Dorsolateral prefrontal cortex (tissue), 120 donors: ENCODE measurements at regions of chr19 and their contacts with region 1.

Region 1: GRCh38 chr19:53195265-53195903 is 2.2 kb upstream of the ZNF665 start:
- DNase-seq: peak; percentile 58 to 91 (median 77)
- H3K4me3 ChIP-seq: no peak overlapping the region
- H3K27ac ChIP-seq: peak overlapping the region in 28 of 59 donors; percentile 0 to 85 (median 44)
- H3K27me3 ChIP-seq: no peaks in the 10 kb centered on the region
- CTCF ChIP-seq: peak; percentile 63 to 96 (median 91)

Region 2: GRCh38 chr19:52962394-52963246 is 232.8 kb before region 1 on chr19 and contains the start of gene ZNF816:
- intact Hi-C with region 1: loop called in 1 of 2 experiments (anchors 10 kb)
- DNase-seq: peak; percentile 83 to 93 (median 88)
- H3K4me3 ChIP-seq: peak within 1 kb of the TSS; percentile 40 to 84 (median 71)
- H3K27ac ChIP-seq: peak within 1 kb of the TSS in 57 of 59 donors; percentile 10 to 89 (median 71)
- H3K27me3 ChIP-seq: no peaks in the 10 kb centered on the region
- CTCF ChIP-seq: peak in 4 of 56 donors; percentile 7 to 40 (median 30)
- total RNA-seq, gene ZNF816: 2.2 to 11.9 (median 5.0) TPM

Region 3: GRCh38 chr19:53103198-53103944 is 92.0 kb before region 1 on chr19 and contains the start of gene ZNF160:
- intact Hi-C with region 1: loop called (anchors 10 kb)
- DNase-seq: peak; percentile 97 to 100 (median 98)
- H3K4me3 ChIP-seq: peak within 1 kb of the TSS; percentile 68 to 98 (median 92)
- H3K27ac ChIP-seq: peak within 1 kb of the TSS; percentile 15 to 98 (median 91)
- H3K27me3 ChIP-seq: no peaks in the 10 kb centered on the region
- CTCF ChIP-seq: peak in 7 of 56 donors; percentile 4 to 39 (median 21)
- total RNA-seq, gene ZNF160: 31.4 to 79.2 (median 44.7) TPM

Region 4: DNA sequence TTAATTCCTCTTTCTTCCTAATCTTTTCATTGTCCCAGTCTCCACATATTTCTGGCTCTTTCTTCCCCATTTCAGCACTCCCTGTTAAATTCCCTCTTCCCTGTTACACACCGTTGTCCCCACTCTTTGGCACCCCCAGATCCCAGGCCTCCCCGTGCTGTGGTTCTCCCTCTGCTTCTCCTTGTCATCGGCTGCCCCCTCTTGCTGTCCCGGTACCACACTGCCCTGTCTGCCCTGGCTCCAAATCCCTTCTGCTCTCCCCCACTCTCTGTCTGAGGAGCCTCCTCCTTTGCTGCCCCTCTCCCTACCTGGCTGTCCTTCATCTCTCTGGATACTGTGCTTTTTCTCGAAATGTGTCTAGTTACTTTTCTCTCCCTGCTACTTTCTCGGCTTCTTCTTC is 63.7 kb before region 1 on chr19:
- intact Hi-C with region 1: no loop called
- DNase-seq: peak in 4 of 10 donors; percentile 23 to 51 (median 47)
- H3K4me3 ChIP-seq: peak overlapping the region; percentile 47 to 90 (median 75)
- H3K27ac ChIP-seq: peak overlapping the region in 41 of 59 donors; percentile 2 to 93 (median 74)
- H3K27me3 ChIP-seq: no peaks in the 10 kb centered on the region
- CTCF ChIP-seq: peak in 12 of 56 donors; percentile 4 to 38 (median 29)

Region 5: GRCh38 chr19:53254411-53255341 is 59.3 kb after region 1 on chr19 and contains the start of gene ZNF677:
- intact Hi-C with region 1: loop called in 1 of 2 experiments (anchors 5 kb)
- DNase-seq: peak; percentile 89 to 97 (median 94)
- H3K4me3 ChIP-seq: peak within 1 kb of the TSS; percentile 62 to 97 (median 85)
- H3K27ac ChIP-seq: peak within 1 kb of the TSS in 47 of 59 donors; percentile 2 to 88 (median 74)
- H3K27me3 ChIP-seq: peaks cover 0 to 5% (median 0%) of the 10 kb centered on the region in 45 donors
- CTCF ChIP-seq: peak in 4 of 56 donors; percentile 8 to 17 (median 10)
- total RNA-seq, gene ZNF677: 8.9 to 29.8 (median 17.3) TPM

Region 6: DNA sequence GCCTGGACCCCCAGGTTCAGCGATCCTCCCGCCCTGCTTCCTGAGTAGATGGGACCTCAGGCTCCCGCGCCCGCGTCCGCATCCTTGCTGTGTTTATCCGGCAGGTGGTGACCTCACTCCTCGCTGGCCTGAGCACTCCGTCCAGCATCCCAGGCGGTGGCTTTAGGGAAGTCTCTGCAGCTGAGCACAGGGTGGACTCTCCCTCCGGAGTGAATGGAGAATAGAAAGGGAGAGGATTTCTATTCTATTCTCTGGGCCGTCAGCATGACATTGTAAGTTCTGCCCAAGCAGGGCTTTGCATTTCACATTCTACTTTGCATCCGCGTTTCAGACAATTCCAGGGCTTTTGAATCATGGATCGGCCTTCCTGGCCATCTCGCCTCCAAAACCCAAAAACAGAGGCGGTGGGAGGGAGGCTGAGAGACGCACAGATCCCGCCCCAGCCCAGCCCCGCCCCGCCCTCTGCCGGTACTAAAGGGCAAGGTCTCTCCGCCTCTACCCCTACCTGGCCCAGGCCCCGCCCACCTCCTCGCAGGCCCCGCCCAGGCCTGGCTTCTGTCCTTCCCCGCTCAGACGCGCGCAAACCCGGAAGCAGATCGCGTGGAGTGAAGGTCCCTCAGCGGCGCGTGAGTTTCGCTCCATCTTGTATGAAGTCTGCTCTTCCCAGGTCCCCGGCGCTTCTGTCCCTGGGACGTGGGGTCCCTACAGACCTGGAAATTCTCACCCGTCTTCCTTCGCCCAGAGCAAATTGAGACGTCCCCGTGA is 169.9 kb after region 1 on chr19 and contains the start of gene ZNF525:
- intact Hi-C with region 1: loop called (anchors 5 to 10 kb)
- DNase-seq: peak; percentile 68 to 97 (median 89)
- H3K4me3 ChIP-seq: peak within 1 kb of the TSS; percentile 52 to 90 (median 75)
- H3K27ac ChIP-seq: peak within 1 kb of the TSS in 39 of 59 donors; percentile 14 to 80 (median 65)
- H3K27me3 ChIP-seq: no peaks in the 10 kb centered on the region
- CTCF ChIP-seq: peak in 36 of 56 donors; percentile 5 to 54 (median 26)
- total RNA-seq, gene ZNF525: 6.4 to 32.3 (median 11.1) TPM